HCT116 (cell line): ENCODE measurements at regions of chr1 and their contacts with region 1.

Region 1: GRCh38 chr1:43678940-43679339 is 28.4 kb upstream of the ST3GAL3 start:
- DNase-seq: no peak
- ATAC-seq: no peak
- H3K4me3 ChIP-seq: no peak overlapping the region
- H3K27ac ChIP-seq: no peak overlapping the region
- H3K4me1 ChIP-seq: no peaks in the 10 kb centered on the region
- H3K27me3 ChIP-seq: no peaks in the 10 kb centered on the region
- CTCF ChIP-seq: no peak
- POLR2A ChIP-seq: no peak
- RAD21 ChIP-seq: no peak

Region 2: DNA sequence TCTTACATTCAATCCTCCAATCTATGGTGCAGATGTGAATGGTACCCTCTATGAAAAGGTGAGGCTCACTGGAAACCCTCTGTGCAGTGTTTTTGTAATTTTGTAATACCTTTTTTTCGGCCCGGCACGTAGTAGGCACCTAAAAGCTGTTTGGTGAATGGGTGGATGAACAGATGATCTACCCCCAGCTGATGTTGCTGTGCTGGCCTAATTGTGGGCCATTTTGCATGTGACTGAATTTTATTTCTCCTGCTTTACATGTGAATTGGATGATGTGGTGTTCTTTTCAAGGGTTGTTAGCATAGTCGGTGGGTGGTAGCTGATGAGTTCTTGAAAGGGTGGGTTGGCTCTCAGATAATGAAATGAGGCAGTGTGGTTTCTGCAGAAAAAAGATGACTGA is 18.6 kb before region 1 on chr1:
- CTCF ChIA-PET with region 1: no interaction called
- POLR2A ChIA-PET with region 1: no interaction called
- RAD21 ChIA-PET with region 1: no interaction called
- intact Hi-C with region 1: loop called (anchors 1 kb)
- DNase-seq: no peak
- ATAC-seq: no peak
- H3K4me3 ChIP-seq: no peak overlapping the region
- H3K27ac ChIP-seq: no peak overlapping the region
- H3K4me1 ChIP-seq: no peaks in the 10 kb centered on the region
- H3K27me3 ChIP-seq: no peaks in the 10 kb centered on the region
- CTCF ChIP-seq: no peak
- POLR2A ChIP-seq: no peak
- RAD21 ChIP-seq: no peak

Region 3: GRCh38 chr1:44084998-44085675 is 406.2 kb after region 1 on chr1:
- CTCF ChIA-PET with region 1: no interaction called
- POLR2A ChIA-PET with region 1: no interaction called
- RAD21 ChIA-PET with region 1: no interaction called
- intact Hi-C with region 1: no loop called
- DNase-seq: peak; percentile 16
- ATAC-seq: peak; percentile 48
- H3K4me3 ChIP-seq: no peak overlapping the region
- H3K27ac ChIP-seq: no peak overlapping the region
- H3K4me1 ChIP-seq: peaks cover 14 to 18% of the 10 kb centered on the region in 2 experiments
- H3K27me3 ChIP-seq: no peaks in the 10 kb centered on the region
- CTCF ChIP-seq: no peak
- POLR2A ChIP-seq: no peak
- RAD21 ChIP-seq: no peak